ENCODE measurements at regions of chr9 and their contacts with region 1.

Region 1: GRCh38 chr9:81999806-82000205 is 11.2 kb downstream of the SPATA31D1 start:
- DNase-seq: no peak
- ATAC-seq: no peak
- H3K4me3 Mint-ChIP-seq: no peak overlapping the region
- H3K27ac Mint-ChIP-seq: no peak overlapping the region
- H3K4me1 Mint-ChIP-seq: no peaks in the 10 kb centered on the region
- H3K27me3 Mint-ChIP-seq: no peaks in the 10 kb centered on the region

Region 2: DNA sequence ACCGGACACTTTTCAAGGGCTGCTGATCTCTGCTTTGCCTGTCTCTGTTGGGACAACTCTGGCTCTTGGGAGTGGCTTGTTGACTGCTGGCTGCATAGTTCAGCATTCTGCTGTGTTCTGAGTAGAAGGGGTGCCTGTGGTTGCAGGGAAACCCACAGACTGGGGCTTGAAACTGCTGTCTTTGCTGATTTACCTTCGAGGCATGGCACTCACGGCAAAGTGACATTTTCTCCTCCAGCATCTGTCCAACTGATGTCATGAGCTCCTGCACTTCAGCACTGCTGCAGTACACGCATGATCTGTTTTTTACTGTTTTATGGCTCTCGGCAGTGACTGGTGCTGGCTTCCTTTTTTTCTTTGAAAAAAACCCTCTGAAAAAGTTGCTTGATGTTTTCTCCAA is 58.0 kb after region 1 on chr9:
- CTCF ChIA-PET with region 1: no interaction called
- POLR2A ChIA-PET with region 1: no interaction called
- intact Hi-C with region 1: loop called in 1 of 2 experiments (anchors 10 kb)
- DNase-seq: no peak
- ATAC-seq: no peak
- H3K4me3 Mint-ChIP-seq: no peak overlapping the region
- H3K27ac Mint-ChIP-seq: no peak overlapping the region
- H3K4me1 Mint-ChIP-seq: no peaks in the 10 kb centered on the region
- H3K27me3 Mint-ChIP-seq: no peaks in the 10 kb centered on the region

Measured in activated CD4-positive, alpha-beta T cell treated with anti-CD3 and anti-CD28 coated beads for 36 hours (primary cell).